Mammary epithelial cell (primary cell): ENCODE measurements at regions of chr7 and their contacts with region 1.

Region 1: DNA sequence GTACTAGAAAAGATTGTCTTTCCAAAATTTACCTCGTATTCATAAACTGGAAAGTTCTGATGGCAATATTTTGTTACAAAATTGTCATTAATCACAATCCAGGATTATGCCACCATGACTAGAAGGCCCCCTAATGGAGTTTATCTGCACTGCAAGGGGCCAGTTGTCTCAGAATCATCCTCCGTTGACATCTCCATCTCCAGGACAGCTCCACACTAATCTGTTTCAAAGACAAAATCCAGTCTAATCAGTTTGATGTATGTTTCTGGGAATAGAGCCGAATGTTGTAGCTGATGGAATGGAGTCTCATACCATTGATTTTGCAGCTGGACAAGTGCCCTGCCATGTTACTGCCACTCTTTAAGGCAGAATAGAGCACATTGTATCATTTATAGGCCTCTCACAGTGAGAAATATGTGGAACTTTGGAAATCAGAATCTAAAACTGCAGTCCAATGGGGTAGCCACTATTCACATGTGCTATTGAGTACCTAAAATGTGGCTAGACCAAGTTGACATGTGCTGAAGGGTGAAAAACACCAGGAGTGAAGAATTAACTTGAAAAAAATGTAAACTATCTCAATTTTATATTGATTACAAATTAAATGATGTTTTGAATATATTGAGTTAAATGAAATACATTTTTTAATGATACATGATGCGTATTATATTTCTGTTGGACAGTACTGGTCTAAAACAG is 38.3 kb upstream of the TOMM7 start:
- DNase-seq: peak; percentile 22
- H3K4me3 ChIP-seq: no peak overlapping the region
- H3K27ac ChIP-seq: peak overlapping the region; percentile 99
- H3K4me1 ChIP-seq: peaks cover 53% of the 10 kb centered on the region
- H3K27me3 ChIP-seq: no peaks in the 10 kb centered on the region
- CTCF ChIP-seq: peak; percentile 51 to 62

Region 2: DNA sequence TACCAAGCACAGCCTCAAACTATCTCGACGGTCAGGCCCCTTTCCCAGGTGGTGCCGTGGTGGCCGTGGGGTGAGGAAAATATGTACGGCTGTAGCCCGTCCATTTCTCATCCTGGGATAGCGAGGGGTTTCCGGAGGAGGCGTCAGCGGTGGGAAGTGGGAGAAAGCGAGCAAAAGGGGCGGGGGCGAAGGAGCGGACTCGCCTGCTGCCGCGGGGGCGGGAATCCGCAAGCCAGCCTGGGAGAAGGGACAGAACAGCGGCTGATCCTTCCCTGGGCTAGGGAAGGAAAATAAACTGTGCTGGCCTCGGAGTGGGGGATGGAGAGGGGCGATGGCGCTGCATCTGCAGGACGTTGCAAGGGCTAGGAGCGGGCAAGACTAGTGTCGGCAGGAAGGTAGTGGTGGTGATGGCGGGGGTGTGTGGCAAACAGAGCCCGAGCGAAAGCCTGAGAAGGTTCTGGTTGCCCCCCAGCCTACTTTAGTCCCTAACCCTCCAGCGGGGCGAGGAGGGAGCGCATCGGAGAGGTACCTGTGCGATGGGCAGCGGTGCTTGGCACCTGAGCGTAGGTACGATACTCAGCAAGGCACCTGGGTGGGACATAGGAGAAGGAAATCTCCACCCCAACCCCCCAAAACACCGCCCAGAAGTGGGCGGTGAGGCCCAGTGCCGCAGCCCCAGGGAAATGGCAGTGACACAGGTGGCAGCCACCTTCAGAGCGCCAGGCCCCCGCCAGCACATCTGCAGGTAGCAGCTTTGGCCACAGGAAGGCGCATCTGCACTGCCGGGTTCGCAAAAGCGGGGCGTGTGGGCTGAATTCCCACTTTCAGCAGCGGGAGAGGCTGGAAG is 311.0 kb before region 1 on chr7:
- CTCF ChIA-PET with region 1: no interaction called
- dilution Hi-C with region 1: no loop called
- in situ Hi-C with region 1: no loop called
- intact Hi-C with region 1: loop called (anchors 2 kb)
- DNase-seq: peak; percentile 26
- H3K4me3 ChIP-seq: peak overlapping the region in 2 of 3 experiments; percentile 40 to 43
- H3K27ac ChIP-seq: no peak overlapping the region
- H3K4me1 ChIP-seq: peaks cover 11% of the 10 kb centered on the region
- H3K27me3 ChIP-seq: no peaks in the 10 kb centered on the region
- CTCF ChIP-seq: peak; percentile 69 to 75

Region 3: DNA sequence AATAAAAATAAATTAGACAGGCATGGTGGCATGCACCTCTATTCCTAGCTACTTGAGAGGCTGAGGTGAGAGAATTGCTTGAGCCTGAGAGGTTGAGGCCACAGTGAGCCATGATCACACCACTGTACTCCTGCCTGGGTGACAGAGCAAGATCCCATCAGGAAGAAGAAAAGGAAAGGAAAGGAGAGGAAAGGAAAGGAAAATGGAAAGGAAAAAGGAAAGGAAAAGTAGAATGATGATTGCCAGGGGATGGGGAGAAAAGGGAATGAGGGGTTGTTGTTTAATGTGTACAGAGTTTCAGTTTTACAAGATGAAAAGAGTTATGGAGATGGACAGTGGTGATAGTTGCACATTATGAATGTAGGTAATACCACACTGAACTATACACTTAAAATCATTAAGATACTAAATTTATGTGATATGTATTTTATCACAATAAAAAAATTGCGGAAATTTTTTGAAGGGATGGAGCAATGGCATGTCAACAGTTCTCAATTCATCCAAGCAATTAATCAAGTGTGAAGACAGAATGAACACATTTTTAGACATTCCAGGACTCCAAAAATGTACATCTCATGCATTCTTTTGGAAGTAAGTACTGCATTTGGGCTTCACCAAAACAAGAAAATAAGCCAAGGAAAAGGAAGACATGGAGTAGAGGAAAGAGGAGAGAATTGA is 89.6 kb before region 1 on chr7:
- CTCF ChIA-PET with region 1: no interaction called
- dilution Hi-C with region 1: no loop called
- in situ Hi-C with region 1: no loop called
- intact Hi-C with region 1: no loop called
- DNase-seq: no peak
- H3K4me3 ChIP-seq: no peak overlapping the region
- H3K27ac ChIP-seq: no peak overlapping the region
- H3K4me1 ChIP-seq: no peaks in the 10 kb centered on the region
- H3K27me3 ChIP-seq: peaks cover 2% of the 10 kb centered on the region
- CTCF ChIP-seq: no peak